Ovary (tissue), 10 donors: ENCODE measurements at regions of chr5 and their contacts with region 1.

Region 1: DNA sequence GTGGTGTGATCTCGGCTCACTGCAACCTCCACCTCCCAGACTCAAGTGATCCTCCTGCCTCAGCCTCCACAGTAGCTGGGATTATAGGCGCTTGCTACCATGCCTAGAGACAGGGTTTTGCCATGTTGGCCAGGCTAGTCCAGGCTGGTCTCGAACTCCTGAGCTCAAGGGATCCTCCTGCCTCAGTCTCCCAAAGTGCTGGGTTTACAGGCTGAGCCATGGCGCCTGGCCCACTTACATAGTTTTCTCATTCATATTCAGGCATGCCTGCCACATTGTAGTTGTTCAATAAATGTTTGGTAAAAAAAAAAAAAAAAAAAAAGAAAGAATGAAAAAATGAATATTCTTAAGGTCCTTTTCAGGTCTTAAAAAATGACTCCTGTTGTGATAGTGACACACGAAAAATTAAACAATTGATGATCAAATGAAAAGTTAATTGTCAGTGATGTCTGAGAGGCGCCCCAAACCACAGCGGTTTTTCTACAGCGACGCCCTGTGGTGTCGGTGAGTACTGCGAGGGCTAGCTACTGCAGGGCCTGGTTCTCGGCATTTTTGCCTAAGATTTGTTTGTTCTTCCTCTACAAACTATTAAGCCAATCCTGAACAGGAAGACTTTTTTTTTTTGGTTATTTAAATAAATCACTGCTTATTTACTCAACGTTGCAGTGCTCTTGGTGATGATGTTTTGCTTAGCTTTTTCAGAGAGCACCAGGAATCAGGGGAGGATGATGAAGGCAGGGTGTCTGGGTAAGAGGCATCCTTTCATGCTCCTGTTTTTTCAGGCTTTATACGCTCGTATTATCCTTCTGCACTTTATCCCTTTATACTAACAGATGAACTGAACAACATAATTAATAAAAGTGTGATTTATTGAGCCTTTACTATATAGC is 67.0 kb upstream of the DPYSL3 start:
- DNase-seq: peak; percentile 46 to 85 (median 79)
- H3K4me3 ChIP-seq: no peak overlapping the region
- H3K27ac ChIP-seq: peak overlapping the region in 1 of 2 donors; percentile 63
- H3K4me1 ChIP-seq: peaks cover 1% of the 10 kb centered on the region
- H3K27me3 ChIP-seq: no peaks in the 10 kb centered on the region
- CTCF ChIP-seq: peak; percentile 61 to 74 (median 68)
- EP300 ChIP-seq: no peak
- POLR2A ChIP-seq: no peak

Region 2: GRCh38 chr5:147223948-147224791 is 352.7 kb before region 1 on chr5:
- intact Hi-C with region 1: loop called in 2 of 4 experiments (anchors 5 kb)
- DNase-seq: peak in 3 of 5 donors; percentile 21 to 63 (median 53)
- H3K4me3 ChIP-seq: no peak overlapping the region
- H3K27ac ChIP-seq: no peak overlapping the region
- H3K4me1 ChIP-seq: no peaks in the 10 kb centered on the region
- H3K27me3 ChIP-seq: no peaks in the 10 kb centered on the region
- CTCF ChIP-seq: peak; percentile 26 to 71 (median 58)
- EP300 ChIP-seq: no peak
- POLR2A ChIP-seq: no peak

Region 3: DNA sequence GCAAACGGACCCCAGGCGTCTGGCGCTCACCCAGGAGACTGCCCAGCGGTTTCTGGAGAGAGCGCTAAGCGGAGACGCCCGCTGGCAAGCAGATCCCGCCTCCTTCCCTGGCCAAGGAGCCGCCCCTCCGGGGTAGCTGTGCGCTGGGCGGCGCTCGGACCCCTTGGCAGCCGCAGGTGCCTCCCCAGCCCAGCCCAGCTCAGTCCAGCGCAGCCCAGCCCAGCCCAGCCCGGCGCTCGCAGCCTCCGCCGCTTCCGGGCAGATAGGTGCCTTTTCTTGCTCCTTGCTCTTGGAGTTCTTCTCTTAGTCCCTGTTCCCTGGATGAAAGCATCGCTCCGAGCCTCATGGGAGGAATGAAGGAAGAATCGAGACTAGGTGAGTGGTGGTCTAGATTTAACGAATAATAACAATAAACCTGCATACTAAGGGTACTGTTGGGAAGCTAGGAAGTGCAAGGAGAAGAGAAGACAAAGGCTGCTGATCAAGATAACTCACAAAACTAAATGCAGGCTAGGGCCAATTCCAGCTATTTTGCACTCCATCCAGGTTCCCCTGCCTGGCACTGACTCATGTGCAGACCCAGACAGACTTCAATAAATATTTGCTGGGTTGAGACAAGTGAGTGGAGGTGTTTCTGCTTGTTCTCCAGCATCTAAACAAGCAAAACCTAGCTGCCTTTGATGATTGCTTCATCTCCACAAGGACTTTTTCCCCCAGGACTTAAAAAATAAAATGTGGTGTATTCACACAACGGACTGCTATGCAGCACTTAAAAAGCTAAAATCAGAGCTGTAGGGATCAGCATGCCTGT is 341.9 kb before region 1 on chr5 and contains the start of gene STK32A:
- intact Hi-C with region 1: loop called in 1 of 4 experiments (anchors 5 kb)
- DNase-seq: peak; percentile 59 to 79 (median 77)
- H3K4me3 ChIP-seq: peak within 1 kb of the TSS; percentile 72
- H3K27ac ChIP-seq: peak within 1 kb of the TSS; percentile 81 to 88
- H3K4me1 ChIP-seq: peaks cover 4% of the 10 kb centered on the region
- H3K27me3 ChIP-seq: no peaks in the 10 kb centered on the region
- CTCF ChIP-seq: no peak
- EP300 ChIP-seq: no peak
- POLR2A ChIP-seq: no peak
- total RNA-seq, gene STK32A: 1.8 to 9.0 (median 6.4) TPM

Region 4: GRCh38 chr5:147427521-147428401 is 149.1 kb before region 1 on chr5:
- intact Hi-C with region 1: no loop called
- DNase-seq: no peak
- H3K4me3 ChIP-seq: no peak overlapping the region
- H3K27ac ChIP-seq: no peak overlapping the region
- H3K4me1 ChIP-seq: peaks cover 27% of the 10 kb centered on the region
- H3K27me3 ChIP-seq: no peaks in the 10 kb centered on the region
- CTCF ChIP-seq: no peak
- EP300 ChIP-seq: no peak
- POLR2A ChIP-seq: no peak